ENCODE measurements at regions of chr1 and their contacts with region 1.

Region 1: GRCh38 chr1:204363335-204364124 is 3.8 kb upstream of the PLEKHA6 start:
- DNase-seq: no peak
- H3K4me3 ChIP-seq: peak overlapping the region; percentile 38 to 49
- H3K27ac ChIP-seq: peak overlapping the region; percentile 73
- H3K4me1 ChIP-seq: peaks cover 22% of the 10 kb centered on the region
- H3K27me3 ChIP-seq: no peaks in the 10 kb centered on the region
- CTCF ChIP-seq: peak; percentile 94 to 99 (median 97)
- POLR2A ChIP-seq: no peak

Region 2: GRCh38 chr1:204162231-204163074 is 201.1 kb before region 1 on chr1:
- intact Hi-C with region 1: loop called (anchors 5 kb)
- DNase-seq: no peak
- H3K4me3 ChIP-seq: no peak overlapping the region
- H3K27ac ChIP-seq: no peak overlapping the region
- H3K4me1 ChIP-seq: no peaks in the 10 kb centered on the region
- H3K27me3 ChIP-seq: no peaks in the 10 kb centered on the region
- CTCF ChIP-seq: peak; percentile 94 to 99 (median 97)
- POLR2A ChIP-seq: no peak

Region 3: DNA sequence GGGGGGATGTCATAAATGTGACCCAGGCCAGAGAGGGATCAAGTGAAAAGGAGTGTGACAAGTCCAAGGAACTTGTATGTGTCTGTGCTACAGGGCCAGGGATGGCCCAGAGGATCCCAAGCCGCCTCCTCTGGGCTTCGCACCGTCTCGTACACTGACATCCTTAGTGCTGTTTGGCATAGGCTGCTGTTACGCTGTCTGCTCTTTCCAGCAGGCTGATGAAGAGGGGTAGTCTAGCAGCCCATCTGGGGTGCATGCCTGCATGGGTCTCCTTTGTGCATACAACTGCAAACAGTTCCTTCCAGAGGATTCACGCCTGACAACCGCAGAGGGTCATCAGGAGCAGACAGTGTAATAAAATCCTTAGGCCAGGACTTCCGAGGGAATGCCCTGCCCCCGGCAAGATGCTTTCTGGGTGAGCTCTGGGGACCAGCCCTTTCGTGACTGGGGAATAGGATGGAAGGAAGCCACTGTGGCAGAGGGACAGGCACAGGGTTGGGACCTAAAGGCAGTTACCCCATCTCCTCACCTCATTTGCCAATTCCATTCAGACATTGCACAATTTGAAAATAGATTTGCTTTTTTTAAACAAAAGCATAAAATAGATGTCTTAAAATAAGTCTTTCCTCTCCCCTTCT is 143.4 kb before region 1 on chr1:
- intact Hi-C with region 1: loop called (anchors 5 kb)
- DNase-seq: no peak
- H3K4me3 ChIP-seq: no peak overlapping the region
- H3K27ac ChIP-seq: no peak overlapping the region
- H3K4me1 ChIP-seq: no peaks in the 10 kb centered on the region
- H3K27me3 ChIP-seq: no peaks in the 10 kb centered on the region
- CTCF ChIP-seq: no peak
- POLR2A ChIP-seq: no peak

Region 4: DNA sequence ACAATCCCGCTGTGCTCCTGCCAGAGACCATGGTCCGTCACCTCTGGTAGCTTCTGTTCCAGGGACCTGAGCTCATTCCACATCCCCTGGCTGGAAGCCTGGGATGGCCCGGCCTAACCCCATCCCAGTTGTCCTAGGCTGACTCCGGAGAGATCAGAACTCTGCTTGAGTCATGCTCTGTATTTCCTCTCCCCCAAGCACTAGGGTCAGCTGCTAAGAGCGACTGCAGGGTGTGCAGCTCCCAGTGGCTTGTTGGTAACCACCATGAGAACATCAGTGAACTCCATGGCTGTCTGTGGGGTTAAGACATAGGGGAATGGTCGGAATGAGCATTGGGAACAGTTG is 112.9 kb before region 1 on chr1:
- intact Hi-C with region 1: no loop called
- DNase-seq: no peak
- H3K4me3 ChIP-seq: no peak overlapping the region
- H3K27ac ChIP-seq: no peak overlapping the region
- H3K4me1 ChIP-seq: no peaks in the 10 kb centered on the region
- H3K27me3 ChIP-seq: no peaks in the 10 kb centered on the region
- CTCF ChIP-seq: no peak
- POLR2A ChIP-seq: no peak

Region 5: DNA sequence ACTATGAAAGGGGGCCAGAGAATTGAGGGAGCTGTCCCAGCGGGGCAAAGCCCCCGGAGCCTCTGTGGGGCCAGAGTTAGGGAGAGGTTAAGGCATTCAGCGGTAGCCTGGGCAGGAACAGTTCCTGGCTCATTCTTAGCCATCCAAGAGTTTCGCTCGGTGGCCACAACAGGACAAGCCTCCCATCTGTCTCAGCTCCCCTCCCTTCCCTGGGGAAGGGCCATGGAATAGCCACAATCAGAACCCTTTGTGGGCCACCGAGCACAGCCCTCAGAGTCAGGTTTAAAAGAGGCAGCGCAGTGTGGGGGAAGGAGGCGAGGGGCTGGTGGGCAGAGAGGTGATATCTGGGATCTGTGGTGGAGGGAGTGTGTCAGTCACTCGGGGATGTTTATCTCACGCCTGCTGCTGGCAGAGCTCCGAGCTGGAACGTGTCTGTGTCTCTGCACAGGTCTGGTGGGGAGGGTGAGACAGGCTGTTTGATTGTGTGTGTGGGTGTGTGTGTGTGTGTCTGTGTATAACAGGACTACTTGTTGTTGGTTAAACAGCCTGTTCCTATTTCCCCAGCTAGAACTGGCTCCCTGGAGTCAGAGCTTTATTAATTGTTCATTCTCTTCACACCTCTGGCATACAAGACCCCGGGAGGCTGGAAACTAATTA is 100.1 kb before region 1 on chr1:
- intact Hi-C with region 1: loop called (anchors 5 kb)
- DNase-seq: no peak
- H3K4me3 ChIP-seq: no peak overlapping the region
- H3K27ac ChIP-seq: no peak overlapping the region
- H3K4me1 ChIP-seq: no peaks in the 10 kb centered on the region
- H3K27me3 ChIP-seq: no peaks in the 10 kb centered on the region
- CTCF ChIP-seq: no peak
- POLR2A ChIP-seq: no peak

Region 6: DNA sequence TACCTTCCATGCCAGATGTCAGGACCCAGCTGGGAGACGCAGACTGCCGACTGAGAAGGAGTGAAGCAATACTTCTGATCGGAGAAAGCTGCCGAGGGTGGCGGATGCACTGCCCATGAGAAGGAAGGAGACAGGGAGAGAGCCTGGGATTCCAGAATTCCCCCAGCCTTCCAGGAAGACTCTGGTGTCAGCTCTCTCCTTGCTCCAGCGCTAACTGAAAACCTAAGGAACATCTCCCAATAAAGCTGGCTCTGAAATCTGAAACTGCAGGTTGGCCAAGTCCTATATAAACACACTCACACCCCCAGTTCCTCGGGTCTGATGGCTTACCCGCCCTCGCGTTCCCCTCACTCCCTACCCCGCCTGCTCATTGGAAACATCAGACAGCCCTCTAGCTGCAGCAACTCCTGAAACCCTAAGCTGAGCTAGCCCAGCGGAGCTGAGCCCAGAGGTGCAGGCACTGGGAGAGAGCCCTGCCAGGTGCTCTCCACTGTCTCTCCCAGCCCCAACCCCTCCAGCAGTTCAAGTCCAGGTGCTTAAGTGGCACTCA is 56.1 kb before region 1 on chr1:
- intact Hi-C with region 1: no loop called
- DNase-seq: no peak
- H3K4me3 ChIP-seq: peak overlapping the region in 1 of 2 donors; percentile 8
- H3K27ac ChIP-seq: peak overlapping the region; percentile 56
- H3K4me1 ChIP-seq: peaks cover 8% of the 10 kb centered on the region
- H3K27me3 ChIP-seq: no peaks in the 10 kb centered on the region
- CTCF ChIP-seq: peak in 2 of 3 experiments; percentile 24 to 62
- POLR2A ChIP-seq: no peak

Measured in vagina (tissue), 2 donors.